PC-9 (cell line): ENCODE measurements at regions of chrX and their contacts with region 1.

Region 1: DNA sequence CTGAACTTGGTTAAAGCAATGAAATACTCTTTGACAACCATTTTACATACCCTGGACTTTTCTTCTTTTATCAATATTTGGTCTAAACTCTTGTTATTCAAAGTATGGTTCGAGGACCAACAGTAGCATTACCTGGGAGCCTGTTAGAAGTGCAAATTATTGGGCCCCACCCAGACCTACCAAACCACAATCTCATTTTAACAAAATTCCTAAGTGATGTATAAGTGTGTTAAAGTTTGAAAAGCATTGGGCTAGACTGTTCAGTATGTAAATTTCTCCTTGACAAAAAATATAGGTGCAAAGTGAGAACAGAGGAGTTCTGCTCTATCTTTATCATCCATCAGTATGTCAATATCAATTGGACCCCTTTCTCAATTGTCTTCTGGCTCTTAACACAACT is 67.1 kb downstream of the PGRMC1 start:
- DNase-seq: peak; percentile 16 to 79
- H3K4me3 ChIP-seq: peak overlapping the region; percentile 36; the same call in 1 of the 2 replicates
- H3K27ac ChIP-seq: peak overlapping the region; percentile 69
- H3K4me1 ChIP-seq: peaks cover 33% of the 10 kb centered on the region
- H3K27me3 ChIP-seq: no peaks in the 10 kb centered on the region
- CTCF ChIP-seq: no peak

Region 2: GRCh38 chrX:119337201-119337600 is 34.1 kb after region 1 on chrX:
- CTCF ChIA-PET with region 1: no interaction called
- POLR2A ChIA-PET with region 1: interaction called, 11 read pairs
- intact Hi-C with region 1: no loop called
- DNase-seq: no peak
- H3K4me3 ChIP-seq: no peak overlapping the region
- H3K27ac ChIP-seq: no peak overlapping the region
- H3K4me1 ChIP-seq: no peaks in the 10 kb centered on the region
- H3K27me3 ChIP-seq: no peaks in the 10 kb centered on the region
- CTCF ChIP-seq: no peak